ENCODE measurements at regions of chr21 and their contacts with region 1.

Region 1: GRCh38 chr21:33608559-33608958 is 20.1 kb upstream of the DONSON start:
- DNase-seq: no peak
- ATAC-seq: no peak
- H3K4me3 ChIP-seq: no peak overlapping the region
- H3K4me3 Mint-ChIP-seq: no peak overlapping the region
- H3K27ac ChIP-seq: no peak overlapping the region
- H3K27ac Mint-ChIP-seq: no peak overlapping the region
- H3K4me1 ChIP-seq: no peaks in the 10 kb centered on the region
- H3K4me1 Mint-ChIP-seq: peaks cover 3 to 5% (median 4%) of the 10 kb centered on the region in 3 donors
- H3K27me3 ChIP-seq: no peaks in the 10 kb centered on the region
- H3K27me3 Mint-ChIP-seq: no peaks in the 10 kb centered on the region

Region 2: DNA sequence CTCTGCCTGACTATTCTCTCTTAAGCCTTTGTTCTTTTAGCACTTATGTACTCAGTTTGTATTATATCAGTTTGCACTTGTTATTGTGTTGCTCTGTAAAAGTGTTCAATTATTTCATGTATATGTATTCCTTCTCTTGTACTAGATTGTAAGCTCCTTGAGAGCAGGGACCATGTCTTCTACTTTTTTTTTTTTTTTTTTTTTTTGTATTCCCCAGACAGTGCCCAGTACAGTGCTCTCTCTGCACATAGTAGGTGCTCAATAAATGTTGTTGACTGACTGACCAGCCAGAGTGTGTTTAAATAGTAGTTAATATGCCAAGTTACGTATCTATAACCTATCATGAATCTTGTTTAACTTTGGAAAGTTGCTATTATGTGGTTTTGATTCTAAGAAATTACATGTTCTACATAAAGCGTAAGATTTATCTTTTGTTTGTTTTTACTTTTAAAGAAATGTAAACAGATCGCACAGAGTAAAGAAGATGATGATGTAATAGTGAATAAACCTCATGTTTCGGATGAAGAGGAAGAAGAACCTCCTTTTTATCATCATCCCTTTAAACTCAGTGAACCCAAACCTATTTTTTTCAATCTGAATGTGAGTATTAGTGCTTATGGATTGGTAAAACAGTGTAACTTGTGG is 49.7 kb before region 1 on chr21:
- CTCF ChIA-PET with region 1: interaction called, 3 to 4 read pairs
- POLR2A ChIA-PET with region 1: interaction called in 1 of 2 experiments, 10 read pairs
- DNase-seq: no peak
- ATAC-seq: no peak
- H3K4me3 ChIP-seq: no peak overlapping the region
- H3K4me3 Mint-ChIP-seq: no peak overlapping the region
- H3K27ac ChIP-seq: no peak overlapping the region
- H3K27ac Mint-ChIP-seq: peak overlapping the region in 1 of 2 donors; percentile 50
- H3K4me1 ChIP-seq: peaks cover 3 to 5% of the 10 kb centered on the region in 2 experiments
- H3K4me1 Mint-ChIP-seq: peaks cover 75 to 78% (median 78%) of the 10 kb centered on the region in 3 donors
- H3K27me3 ChIP-seq: no peaks in the 10 kb centered on the region
- H3K27me3 Mint-ChIP-seq: no peaks in the 10 kb centered on the region

Region 3: DNA sequence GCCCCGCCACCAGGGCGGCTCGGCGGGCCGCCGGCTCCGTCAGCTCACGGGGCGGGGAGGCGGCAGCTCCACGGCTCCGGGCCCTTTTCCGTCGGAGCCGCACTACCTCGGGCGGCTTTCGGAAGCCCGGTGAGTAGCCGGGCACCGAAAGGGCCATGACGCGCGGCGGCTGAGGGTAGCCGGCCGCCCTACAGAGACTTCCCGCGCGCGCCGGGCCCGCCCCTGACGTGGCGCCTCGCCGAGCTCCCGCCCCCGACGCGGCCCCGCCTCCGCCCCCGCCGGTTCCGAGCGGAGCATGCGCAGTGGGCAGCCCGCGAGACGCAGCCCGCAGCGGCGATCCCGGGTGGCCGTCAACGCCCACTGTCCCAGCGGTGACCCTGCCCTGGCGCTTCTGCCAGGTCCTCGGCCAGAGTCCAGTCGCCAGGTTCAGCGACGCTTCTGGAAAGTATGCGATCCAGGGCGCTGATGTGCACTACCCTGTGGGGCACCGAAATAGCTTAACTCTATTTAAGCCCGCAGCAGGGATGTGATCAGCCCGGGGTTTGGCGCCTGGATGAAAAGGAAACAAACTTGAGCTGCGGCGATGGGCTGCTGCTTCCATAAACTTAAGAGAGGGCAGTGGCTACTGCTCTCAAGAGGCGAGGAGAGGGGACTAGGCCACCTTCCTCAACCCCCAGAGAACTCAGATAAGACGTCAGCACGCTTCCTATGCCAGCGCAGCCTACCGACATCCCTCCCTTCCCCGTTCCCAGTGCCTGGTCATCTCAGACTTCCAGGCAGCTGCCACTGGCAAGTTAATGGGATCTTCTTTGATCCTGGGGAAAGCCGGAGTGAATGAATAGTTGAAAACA is 19.8 kb before region 1 on chr21 and contains the start of gene DONSON:
- CTCF ChIA-PET with region 1: interaction called, 5 to 30 read pairs
- POLR2A ChIA-PET with region 1: interaction called in 1 of 2 experiments, 4 read pairs
- DNase-seq: peak; percentile 59 to 93 (median 79)
- ATAC-seq: peak; percentile 95 to 96 (median 96)
- H3K4me3 ChIP-seq: peak within 1 kb of the TSS; percentile 84 to 100
- H3K4me3 Mint-ChIP-seq: peak within 1 kb of the TSS; percentile 90 to 92 (median 91)
- H3K27ac ChIP-seq: peak within 1 kb of the TSS; percentile 48
- H3K27ac Mint-ChIP-seq: peak within 1 kb of the TSS; percentile 86 to 91
- H3K4me1 ChIP-seq: peaks cover 5 to 16% of the 10 kb centered on the region in 2 experiments
- H3K4me1 Mint-ChIP-seq: peaks cover 16 to 19% (median 17%) of the 10 kb centered on the region in 3 donors
- H3K27me3 ChIP-seq: no peaks in the 10 kb centered on the region
- H3K27me3 Mint-ChIP-seq: no peaks in the 10 kb centered on the region
- total RNA-seq, gene DONSON: 8.9 to 14.6 (median 11.0) TPM

Region 4: DNA sequence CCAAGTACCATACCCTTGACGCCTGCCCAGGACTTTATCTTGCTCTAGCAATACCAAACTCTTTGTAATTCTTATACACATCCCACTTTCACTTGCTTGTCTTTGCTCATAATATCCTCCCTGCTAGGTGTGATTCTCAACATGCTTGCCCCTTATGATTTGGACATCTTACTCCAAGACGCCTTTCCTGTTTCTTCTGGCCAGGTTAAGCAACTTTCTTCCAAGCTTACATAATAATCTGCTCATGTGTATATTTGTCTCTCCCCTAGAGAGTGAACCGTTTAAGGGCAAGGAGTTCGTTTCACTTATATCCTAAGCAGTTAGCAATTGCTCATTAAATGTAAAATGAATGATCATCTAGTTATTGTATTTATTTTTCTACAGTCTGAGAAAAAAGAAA is 11.2 kb after region 1 on chr21:
- CTCF ChIA-PET with region 1: interaction called, 4 to 13 read pairs
- POLR2A ChIA-PET with region 1: interaction called in 1 of 2 experiments, 3 read pairs
- DNase-seq: no peak
- ATAC-seq: no peak
- H3K4me3 ChIP-seq: no peak overlapping the region
- H3K4me3 Mint-ChIP-seq: no peak overlapping the region
- H3K27ac ChIP-seq: no peak overlapping the region
- H3K27ac Mint-ChIP-seq: no peak overlapping the region
- H3K4me1 ChIP-seq: no peaks in the 10 kb centered on the region
- H3K4me1 Mint-ChIP-seq: no peaks in the 10 kb centered on the region
- H3K27me3 ChIP-seq: no peaks in the 10 kb centered on the region
- H3K27me3 Mint-ChIP-seq: no peaks in the 10 kb centered on the region